Posterior vena cava (tissue), 2 donors: ENCODE measurements at regions of chr7 and their contacts with region 1.

Region 1: GRCh38 chr7:120353171-120353570 is 80.2 kb downstream of the KCND2 start:
- DNase-seq: no peak

Region 2: GRCh38 chr7:120307991-120308545 is 45.1 kb before region 1 on chr7:
- intact Hi-C with region 1: no loop called
- DNase-seq: no peak

Region 3: GRCh38 chr7:120987683-120988590 is 634.8 kb after region 1 on chr7:
- intact Hi-C with region 1: no loop called
- DNase-seq: peak; percentile 97

Region 4: GRCh38 chr7:121054925-121055324 is 701.8 kb after region 1 on chr7:
- intact Hi-C with region 1: loop called in 1 of 2 experiments (anchors 10 kb)
- DNase-seq: no peak